ENCODE measurements at regions of chr7 and their contacts with region 1.

Region 1: DNA sequence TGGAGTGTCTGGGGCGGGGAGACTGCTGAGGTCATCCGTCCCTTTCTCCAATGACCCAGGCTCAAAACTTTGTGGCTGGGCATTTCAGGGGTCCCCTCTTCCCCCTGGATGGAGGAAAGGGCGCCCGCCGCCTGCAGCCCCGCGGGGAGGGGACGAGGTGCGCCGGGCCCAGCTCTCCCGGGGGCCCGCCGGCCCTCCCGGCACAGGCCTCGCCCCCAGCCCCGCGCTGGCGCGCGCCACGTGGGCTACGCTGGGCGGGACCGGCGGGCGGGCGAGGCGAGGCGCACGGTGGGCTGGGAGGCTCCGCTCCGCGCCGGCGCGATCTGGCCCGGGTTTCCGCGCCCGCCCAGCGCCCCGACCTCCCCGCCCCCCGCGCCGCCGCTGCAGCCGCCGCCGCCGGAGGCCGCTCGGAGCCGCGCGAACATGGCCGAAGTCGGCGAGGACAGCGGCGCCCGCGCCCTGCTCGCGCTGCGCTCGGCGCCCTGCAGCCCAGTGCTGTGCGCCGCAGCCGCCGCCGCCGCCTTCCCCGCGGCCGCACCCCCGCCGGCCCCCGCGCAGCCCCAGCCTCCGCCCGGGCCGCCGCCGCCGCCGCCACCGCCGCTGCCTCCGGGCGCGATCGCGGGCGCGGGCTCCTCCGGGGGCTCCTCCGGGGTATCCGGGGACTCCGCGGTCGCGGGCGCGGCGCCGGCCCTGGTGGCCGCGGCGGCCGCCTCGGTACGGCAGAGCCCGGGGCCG is at the start of gene FOXK1:
- DNase-seq: peak; percentile 82
- ATAC-seq: peak; percentile 82 to 91
- total RNA-seq, gene FOXK1: 17.5 to 22.1 TPM

Region 2: GRCh38 chr7:4641667-4642467 is 40.2 kb before region 1 on chr7:
- intact Hi-C with region 1: loop called (anchors 2 to 5 kb)
- DNase-seq: peak; percentile 96
- ATAC-seq: peak; percentile 97 to 98

Region 3: GRCh38 chr7:4744391-4745264 is 62.6 kb after region 1 on chr7:
- intact Hi-C with region 1: loop called in 1 of 2 experiments (anchors 5 kb)
- DNase-seq: peak; percentile 99
- ATAC-seq: peak; percentile 94 to 95

Region 4: DNA sequence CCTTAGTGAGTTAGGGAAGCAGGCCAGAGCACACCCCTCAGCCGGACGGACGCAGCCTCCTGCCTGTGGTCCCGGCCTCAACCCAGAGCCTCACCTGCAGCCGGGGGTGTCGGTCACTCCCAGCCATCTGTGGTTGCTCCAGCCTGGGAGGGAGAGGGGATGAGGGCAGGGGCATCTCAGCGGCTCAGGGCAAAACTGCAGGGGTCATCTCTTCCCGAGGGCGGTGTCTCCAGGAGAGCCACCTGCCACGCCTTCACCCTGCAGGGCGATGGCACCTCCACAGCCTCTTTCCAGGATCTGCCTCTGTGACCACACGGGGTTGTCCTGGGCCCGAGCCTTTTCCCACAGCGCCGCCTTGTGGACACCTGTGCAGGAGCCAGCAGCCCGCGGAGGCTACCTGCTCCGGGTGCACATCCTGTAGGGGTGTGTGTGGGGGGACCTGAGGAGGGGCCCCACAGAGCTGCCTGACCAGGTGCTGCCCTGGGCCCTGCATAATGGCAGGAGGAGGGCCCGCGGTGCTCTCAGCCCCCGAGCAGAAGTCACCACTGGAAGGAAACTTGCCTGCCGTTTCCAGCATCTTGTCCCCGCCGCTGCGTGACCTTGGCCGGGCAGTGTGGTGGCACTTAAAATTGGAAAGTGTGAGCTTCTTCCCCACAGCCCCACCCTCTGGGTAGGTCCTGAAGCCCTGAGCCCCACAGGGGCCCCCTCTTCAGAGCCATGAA is 71.8 kb after region 1 on chr7:
- intact Hi-C with region 1: loop called (anchors 5 kb)
- DNase-seq: peak; percentile 78
- ATAC-seq: peak; percentile 80 to 85

Region 5: DNA sequence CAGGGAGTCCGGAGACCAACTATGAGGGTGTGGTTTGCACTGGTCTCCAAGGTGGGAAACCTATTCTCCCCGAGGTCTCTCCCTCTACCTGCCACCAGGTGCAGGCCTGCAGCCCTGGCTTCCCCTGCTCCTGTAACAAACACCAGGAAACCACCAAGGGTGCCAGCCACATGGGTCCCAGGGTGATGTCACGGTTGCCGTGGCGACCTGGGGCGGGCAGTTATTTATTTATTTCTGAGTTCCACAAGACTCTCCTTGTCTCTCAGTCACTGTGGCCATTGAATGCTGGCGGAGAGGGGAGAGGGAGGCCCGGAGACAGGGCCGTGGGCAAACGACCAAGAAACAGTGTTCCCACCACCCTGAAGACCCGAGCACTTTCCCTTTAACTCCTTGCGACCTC is 249.9 kb after region 1 on chr7:
- intact Hi-C with region 1: no loop called
- DNase-seq: no peak
- ATAC-seq: no peak

Measured in left cardiac atrium (tissue), 4 donors.